Activated CD4-positive, alpha-beta memory T cell treated with anti-CD3 and anti-CD28 coated beads for 36 hours (primary cell): ENCODE measurements at regions of chr10 and their contacts with region 1.

Region 1: GRCh38 chr10:50497757-50498156 is 126.0 kb downstream of the SGMS1 start:
- DNase-seq: no peak
- H3K4me3 Mint-ChIP-seq: no peak overlapping the region
- H3K27ac Mint-ChIP-seq: peak overlapping the region; percentile 57
- H3K4me1 Mint-ChIP-seq: peaks cover 40% of the 10 kb centered on the region
- H3K27me3 Mint-ChIP-seq: no peaks in the 10 kb centered on the region

Region 2: GRCh38 chr10:50396491-50397311 is 101.1 kb before region 1 on chr10:
- CTCF ChIA-PET with region 1: no interaction called
- POLR2A ChIA-PET with region 1: no interaction called
- intact Hi-C with region 1: loop called (anchors 2 kb)
- DNase-seq: peak; percentile 51
- H3K4me3 Mint-ChIP-seq: peak overlapping the region; percentile 17
- H3K27ac Mint-ChIP-seq: peak overlapping the region; percentile 65
- H3K4me1 Mint-ChIP-seq: peaks cover 46% of the 10 kb centered on the region
- H3K27me3 Mint-ChIP-seq: no peaks in the 10 kb centered on the region